ENCODE measurements at regions of chr1 and their contacts with region 1.

Region 1: DNA sequence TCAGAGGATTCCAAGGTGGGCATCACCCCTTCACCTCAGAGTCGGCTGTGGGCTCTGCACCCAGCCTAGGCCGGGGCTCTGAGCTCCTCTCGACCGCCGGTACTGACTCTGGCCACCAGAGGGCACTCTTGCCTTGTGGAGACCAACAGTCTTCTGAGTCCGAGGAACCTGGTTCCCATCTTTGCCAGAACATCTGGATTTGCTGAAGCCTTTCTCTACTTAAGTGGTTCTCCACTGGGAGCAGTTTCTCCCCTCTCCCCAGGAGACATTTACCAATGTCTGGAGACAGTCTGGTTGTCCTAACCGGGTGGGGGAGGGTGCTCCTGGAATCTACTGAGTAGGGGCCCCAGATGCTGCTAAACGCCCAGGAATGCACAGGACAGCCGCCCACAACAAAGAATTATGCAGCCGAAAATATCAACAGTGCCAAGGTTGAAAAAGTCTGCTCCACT is 9.4 kb downstream of the ETV3L start:
- DNase-seq: peak; percentile 75
- ATAC-seq: peak; percentile 91
- H3K4me3 Mint-ChIP-seq: no peak overlapping the region
- H3K27ac Mint-ChIP-seq: no peak overlapping the region
- H3K4me1 Mint-ChIP-seq: no peaks in the 10 kb centered on the region
- H3K27me3 Mint-ChIP-seq: peaks cover 11% of the 10 kb centered on the region
- CTCF ChIP-seq: peak; percentile 53

Region 2: DNA sequence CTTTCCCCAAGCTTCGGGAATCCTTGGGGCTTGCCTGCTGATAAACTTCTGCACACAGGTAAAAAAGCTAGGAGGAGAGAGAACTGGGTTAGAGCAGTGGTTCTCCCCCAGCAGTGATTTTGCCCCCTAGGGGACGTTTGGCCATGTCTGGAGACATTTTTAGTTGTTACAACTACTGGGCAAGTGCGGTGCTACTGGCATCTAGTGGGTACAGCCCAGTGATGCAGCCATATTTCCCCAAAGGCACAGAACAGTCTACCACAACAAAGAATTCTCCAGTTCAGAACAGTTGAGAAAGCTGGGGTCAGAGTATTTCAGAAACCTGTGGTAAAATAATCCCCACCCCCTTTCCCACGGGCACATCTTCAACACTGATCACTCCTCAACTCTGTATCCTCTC is 128.5 kb before region 1 on chr1:
- CTCF ChIA-PET with region 1: no interaction called
- POLR2A ChIA-PET with region 1: no interaction called
- intact Hi-C with region 1: no loop called
- DNase-seq: no peak
- ATAC-seq: peak; percentile 28
- H3K4me3 Mint-ChIP-seq: no peak overlapping the region
- H3K27ac Mint-ChIP-seq: no peak overlapping the region
- H3K4me1 Mint-ChIP-seq: peaks cover 20% of the 10 kb centered on the region
- H3K27me3 Mint-ChIP-seq: no peaks in the 10 kb centered on the region
- CTCF ChIP-seq: no peak

Region 3: GRCh38 chr1:157045251-157046218 is 44.7 kb before region 1 on chr1 and contains the start of gene ARHGEF11:
- CTCF ChIA-PET with region 1: no interaction called
- POLR2A ChIA-PET with region 1: no interaction called
- intact Hi-C with region 1: no loop called
- DNase-seq: peak; percentile 34
- ATAC-seq: peak; percentile 56
- H3K4me3 Mint-ChIP-seq: peak within 1 kb of the TSS; percentile 89
- H3K27ac Mint-ChIP-seq: no peak within 1 kb of the TSS
- H3K4me1 Mint-ChIP-seq: peaks cover 11% of the 10 kb centered on the region
- H3K27me3 Mint-ChIP-seq: peaks cover 62% of the 10 kb centered on the region
- CTCF ChIP-seq: no peak
- total RNA-seq, gene ARHGEF11: 0.95 and 1.8 TPM in 2 replicates

Region 4: GRCh38 chr1:157138220-157139051 is 48.2 kb after region 1 on chr1 and contains the start of gene ETV3:
- CTCF ChIA-PET with region 1: interaction called, 10 read pairs
- POLR2A ChIA-PET with region 1: no interaction called
- intact Hi-C with region 1: no loop called
- DNase-seq: peak; percentile 72
- ATAC-seq: peak; percentile 86
- H3K4me3 Mint-ChIP-seq: peak within 1 kb of the TSS; percentile 94
- H3K27ac Mint-ChIP-seq: peak within 1 kb of the TSS; percentile 93
- H3K4me1 Mint-ChIP-seq: peaks cover 43% of the 10 kb centered on the region
- H3K27me3 Mint-ChIP-seq: no peaks in the 10 kb centered on the region
- CTCF ChIP-seq: no peak
- total RNA-seq, gene ETV3: 26.6 and 31.3 TPM in 2 replicates

Region 5: GRCh38 chr1:157147906-157148717 is 57.9 kb after region 1 on chr1:
- CTCF ChIA-PET with region 1: interaction called, 388 read pairs
- POLR2A ChIA-PET with region 1: no interaction called
- intact Hi-C with region 1: no loop called
- DNase-seq: no peak
- ATAC-seq: no peak
- H3K4me3 Mint-ChIP-seq: no peak overlapping the region
- H3K27ac Mint-ChIP-seq: peak overlapping the region; percentile 37
- H3K4me1 Mint-ChIP-seq: peaks cover 6% of the 10 kb centered on the region
- H3K27me3 Mint-ChIP-seq: peaks cover 8% of the 10 kb centered on the region
- CTCF ChIP-seq: no peak

Region 6: DNA sequence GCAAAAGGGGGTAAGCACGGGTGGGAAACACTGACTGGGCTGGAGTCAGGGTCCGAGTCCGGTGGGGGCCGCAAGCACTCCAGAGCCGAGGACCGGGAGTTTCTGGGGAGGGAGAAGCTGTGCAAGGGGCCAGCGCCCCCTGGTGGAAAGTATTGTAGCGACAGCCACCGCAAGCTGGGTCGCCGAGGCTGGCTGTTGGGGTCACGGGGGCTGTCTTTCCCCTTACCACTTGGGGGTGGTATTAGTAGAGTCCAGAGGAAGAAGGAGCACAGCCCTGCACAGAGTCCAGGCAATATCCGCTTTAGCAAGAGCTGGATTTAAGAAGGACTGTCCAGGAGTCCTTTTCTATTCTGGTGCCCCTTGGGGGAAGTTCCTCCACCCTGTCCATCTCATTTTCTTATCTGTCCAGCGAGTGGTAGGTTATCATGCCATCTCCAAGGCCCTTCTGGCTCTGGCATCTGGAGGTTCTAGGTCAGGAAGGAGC is 65.9 kb after region 1 on chr1:
- CTCF ChIA-PET with region 1: interaction called, 388 read pairs
- POLR2A ChIA-PET with region 1: interaction called, 10 read pairs
- intact Hi-C with region 1: loop called (anchors 1 kb)
- DNase-seq: peak; percentile 73
- ATAC-seq: peak; percentile 80
- H3K4me3 Mint-ChIP-seq: no peak overlapping the region
- H3K27ac Mint-ChIP-seq: no peak overlapping the region
- H3K4me1 Mint-ChIP-seq: peaks cover 3% of the 10 kb centered on the region
- H3K27me3 Mint-ChIP-seq: peaks cover 41% of the 10 kb centered on the region
- CTCF ChIP-seq: peak; percentile 68

Region 7: GRCh38 chr1:157274698-157275534 is 184.7 kb after region 1 on chr1:
- CTCF ChIA-PET with region 1: no interaction called
- POLR2A ChIA-PET with region 1: no interaction called
- intact Hi-C with region 1: no loop called
- DNase-seq: no peak
- ATAC-seq: no peak
- H3K4me3 Mint-ChIP-seq: no peak overlapping the region
- H3K27ac Mint-ChIP-seq: no peak overlapping the region
- H3K4me1 Mint-ChIP-seq: peaks cover 26% of the 10 kb centered on the region
- H3K27me3 Mint-ChIP-seq: no peaks in the 10 kb centered on the region
- CTCF ChIP-seq: no peak

Region 8: DNA sequence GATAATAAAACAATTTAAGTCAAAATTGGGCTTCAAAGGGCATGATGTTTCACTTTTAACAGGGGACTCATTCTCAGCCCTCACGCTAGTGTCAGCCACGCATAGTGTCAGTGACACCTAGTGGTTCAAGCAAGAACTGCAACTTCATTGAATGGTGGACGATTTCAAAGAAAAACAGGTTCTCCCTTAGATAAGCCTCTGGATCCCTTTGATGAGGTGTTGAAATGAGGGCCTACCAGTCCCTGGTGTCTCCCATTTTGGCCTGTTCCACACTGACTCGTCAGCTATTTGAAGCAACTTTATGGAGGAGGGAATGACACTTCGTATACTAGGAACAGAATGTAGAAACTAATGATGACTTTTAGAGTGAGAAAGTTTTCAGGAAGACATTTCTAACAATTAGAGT is 405.9 kb after region 1 on chr1:
- CTCF ChIA-PET with region 1: interaction called, 3 read pairs
- POLR2A ChIA-PET with region 1: no interaction called
- intact Hi-C with region 1: loop called (anchors 2 kb)
- DNase-seq: no peak
- ATAC-seq: peak; percentile 88
- H3K4me3 Mint-ChIP-seq: peak overlapping the region; percentile 44
- H3K27ac Mint-ChIP-seq: peak overlapping the region; percentile 27
- H3K4me1 Mint-ChIP-seq: peaks cover 34% of the 10 kb centered on the region
- H3K27me3 Mint-ChIP-seq: no peaks in the 10 kb centered on the region
- CTCF ChIP-seq: peak; percentile 83

Measured in activated B cell treated with CpG ODN at 0.5 μM for 24 hours (primary cell).